Activated CD4-positive, alpha-beta T cell treated with anti-CD3 and anti-CD28 coated beads, Interleukin-2, amount 10 ng/mL, durations not matched to agents 24 days and 14 days (primary cell): ENCODE measurements at regions of chr12 and their contacts with region 1.

Region 1: DNA sequence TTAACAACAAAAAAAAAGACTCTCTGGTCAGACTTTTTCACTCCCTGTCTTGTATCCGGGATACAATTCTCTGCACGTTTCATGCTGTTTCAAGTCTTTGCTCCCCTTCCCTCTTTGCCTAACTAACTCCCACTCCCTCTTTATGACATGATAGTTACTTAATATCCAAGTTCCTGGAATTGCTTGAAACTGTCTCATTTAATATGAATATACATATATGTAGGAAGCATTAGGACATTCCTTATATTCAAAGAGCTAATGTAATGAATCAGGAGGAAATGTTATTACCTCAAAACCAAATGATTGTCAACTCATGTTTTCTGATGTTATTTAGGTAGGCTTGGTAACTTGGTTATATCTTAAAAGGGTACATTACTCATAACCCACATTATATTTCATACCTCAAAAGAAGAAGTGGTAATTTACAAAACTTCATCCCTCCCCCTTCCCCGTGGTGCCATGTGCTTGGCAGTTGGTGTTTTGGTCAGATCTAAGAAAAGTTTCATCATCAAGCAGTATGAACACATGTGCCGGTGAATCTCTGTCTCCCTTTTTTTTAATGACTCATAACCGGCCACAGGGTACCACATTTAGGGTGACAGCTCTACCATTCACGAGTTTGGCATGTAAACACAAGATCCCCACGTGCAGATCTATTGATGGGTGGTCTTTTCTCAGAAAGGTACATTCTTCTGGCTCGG is 56.5 kb downstream of the HCAR2 start:
- DNase-seq: peak; percentile 79
- H3K4me3 Mint-ChIP-seq: peak overlapping the region; percentile 73
- H3K27ac Mint-ChIP-seq: peak overlapping the region; percentile 79
- H3K4me1 Mint-ChIP-seq: peaks cover 17% of the 10 kb centered on the region
- H3K27me3 Mint-ChIP-seq: no peaks in the 10 kb centered on the region

Region 2: DNA sequence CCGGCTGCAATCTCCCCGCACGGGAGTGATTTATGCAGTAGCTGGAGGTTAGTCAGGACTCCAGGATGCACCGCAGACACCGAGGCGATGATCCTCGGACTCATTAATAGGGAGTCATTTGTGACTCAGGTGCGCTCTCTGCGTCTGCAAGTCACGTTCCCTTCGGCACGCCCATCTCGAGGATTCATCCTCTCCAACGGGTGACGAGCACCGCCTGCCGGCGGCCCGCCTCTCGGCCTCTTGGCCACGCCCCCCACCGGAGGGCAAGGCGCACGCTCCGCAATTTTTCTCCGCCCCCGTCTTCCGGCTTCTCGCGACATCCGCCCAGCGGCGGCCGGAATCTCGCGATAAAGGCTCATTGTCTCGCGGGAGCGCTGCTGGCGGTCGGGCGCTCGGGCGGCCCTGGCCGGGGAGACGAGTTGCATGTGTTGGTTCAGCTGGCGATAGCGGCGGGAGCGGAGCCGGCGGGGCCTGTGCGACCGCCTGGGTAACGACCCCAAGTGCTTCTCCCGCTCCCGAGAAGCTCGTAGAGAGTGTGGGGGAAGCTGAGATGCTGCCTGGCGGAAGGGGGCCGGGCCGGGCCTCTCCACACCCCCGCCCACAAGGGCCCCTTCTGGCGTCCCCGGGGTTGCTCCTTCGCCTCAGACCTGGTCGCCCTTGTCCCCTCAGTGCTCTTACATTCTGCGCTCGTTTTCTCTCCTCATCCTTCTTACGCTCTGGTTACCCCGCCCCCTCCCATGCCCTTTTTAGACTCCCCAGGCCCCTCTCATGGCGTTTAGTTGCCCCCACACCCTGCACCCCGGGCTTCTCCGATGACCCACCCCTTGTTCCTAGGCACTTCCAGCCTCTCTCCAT is 106.0 kb after region 1 on chr12 and contains the start of gene DENR:
- intact Hi-C with region 1: loop called (anchors 1 kb)
- DNase-seq: peak; percentile 100
- H3K4me3 Mint-ChIP-seq: peak within 1 kb of the TSS; percentile 93
- H3K27ac Mint-ChIP-seq: peak within 1 kb of the TSS; percentile 98
- H3K4me1 Mint-ChIP-seq: peaks cover 50% of the 10 kb centered on the region
- H3K27me3 Mint-ChIP-seq: no peaks in the 10 kb centered on the region
- total RNA-seq, gene DENR: 88.7 and 89.6 TPM in 2 replicates